BJ (cell line): ENCODE measurements at regions of chr11 and their contacts with region 1.

Region 1: DNA sequence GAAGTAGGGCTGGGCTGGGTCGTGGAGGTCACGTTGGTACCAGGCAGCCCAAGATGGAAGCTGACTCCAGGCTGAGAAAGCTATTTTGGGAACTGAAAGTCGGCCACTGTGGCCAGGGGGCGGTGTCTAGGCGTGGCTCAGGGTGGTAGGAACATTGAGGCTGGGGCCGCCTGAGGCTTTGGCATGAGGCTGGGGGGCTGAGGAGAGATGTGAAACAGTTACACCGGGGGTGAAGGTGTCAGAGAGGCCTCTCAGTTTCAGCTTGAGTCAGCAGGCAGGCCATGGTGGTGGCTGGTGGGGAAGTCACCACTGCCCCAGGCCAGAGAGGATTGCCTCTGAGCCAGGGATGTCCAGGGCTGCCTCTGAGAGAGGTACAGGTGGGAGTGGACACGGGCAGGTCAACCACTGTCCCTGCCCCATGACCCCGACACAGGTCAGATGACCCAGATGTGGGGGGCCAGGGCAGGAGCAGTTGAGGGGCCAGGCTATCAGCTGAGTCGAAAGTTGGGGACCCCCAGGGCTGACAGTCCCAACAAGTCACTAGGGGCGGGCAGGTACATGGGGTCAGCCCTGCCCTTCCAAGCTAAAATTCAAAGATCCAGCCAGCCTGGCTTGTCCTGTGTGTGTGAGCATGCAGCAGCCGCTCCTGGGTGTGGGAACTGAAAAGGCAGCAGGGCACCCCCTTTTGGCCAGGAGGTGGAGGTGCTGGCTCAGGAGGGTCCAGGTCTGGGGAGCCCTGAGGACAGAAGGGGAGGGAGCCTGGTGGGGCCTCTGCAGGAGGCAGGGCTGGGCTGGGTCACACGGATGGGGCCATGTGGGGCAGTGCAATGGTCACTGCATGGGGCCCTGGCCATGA is 7.2 kb downstream of the KCNK7 start:
- DNase-seq: no peak
- H3K4me3 ChIP-seq: no peak overlapping the region
- H3K27me3 ChIP-seq: no peaks in the 10 kb centered on the region
- CTCF ChIP-seq: peak; percentile 58

Region 2: DNA sequence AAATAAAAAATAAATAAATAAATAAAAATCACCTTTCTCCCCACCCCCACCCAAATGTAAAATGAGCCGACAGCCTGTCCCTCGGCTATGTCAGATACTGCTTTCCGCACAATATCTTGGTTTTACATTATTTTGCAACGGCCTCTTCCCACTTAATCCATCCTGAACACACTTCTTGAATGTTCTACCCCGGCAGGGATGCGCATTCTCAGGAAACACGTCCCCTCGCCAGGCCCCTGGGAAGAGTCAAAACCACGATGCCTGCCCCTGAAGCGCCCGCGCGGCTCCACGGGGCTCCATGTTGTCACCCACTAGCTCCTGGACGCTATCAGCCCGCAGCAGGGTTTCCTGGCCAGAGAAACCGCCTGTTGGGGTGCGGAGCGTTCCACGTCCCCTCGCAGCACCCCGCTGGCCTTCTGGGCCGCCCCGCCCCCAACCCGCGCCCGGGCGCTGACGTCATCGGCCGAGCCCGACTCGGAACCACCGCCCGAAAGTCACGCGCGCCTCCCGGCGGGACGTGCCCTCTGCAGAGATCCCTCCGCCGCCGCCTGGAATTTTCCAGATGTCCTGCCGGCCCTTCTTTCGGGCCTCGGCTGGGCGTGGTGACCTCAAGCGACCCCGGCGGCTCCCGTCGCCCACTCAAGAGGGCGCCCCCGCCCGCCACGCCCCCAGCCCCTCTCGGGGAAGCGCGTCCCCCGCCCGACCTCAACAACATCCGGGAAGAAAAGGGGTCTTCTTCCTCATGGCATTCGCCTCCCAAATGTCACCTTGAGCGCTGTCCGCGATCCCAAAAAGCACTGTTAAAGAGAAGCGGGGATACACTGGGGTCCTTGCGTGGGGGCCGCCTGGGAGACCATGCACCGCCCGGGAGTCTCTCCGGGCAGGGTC is 166.4 kb before region 1 on chr11:
- CTCF ChIA-PET with region 1: no interaction called
- POLR2A ChIA-PET with region 1: no interaction called
- DNase-seq: peak; percentile 65
- H3K4me3 ChIP-seq: peak overlapping the region; percentile 72
- H3K27me3 ChIP-seq: no peaks in the 10 kb centered on the region
- CTCF ChIP-seq: no peak

Region 3: GRCh38 chr11:65569973-65570918 is 18.2 kb before region 1 on chr11 and contains the start of gene ZNRD2:
- CTCF ChIA-PET with region 1: interaction called, 83 read pairs
- POLR2A ChIA-PET with region 1: interaction called, 21 read pairs
- DNase-seq: peak; percentile 89
- H3K4me3 ChIP-seq: peak within 1 kb of the TSS; percentile 93
- H3K27me3 ChIP-seq: no peaks in the 10 kb centered on the region
- CTCF ChIP-seq: peak; percentile 57
- polyA plus RNA-seq, gene ZNRD2: 48.7 and 73.3 TPM in 2 replicates

Region 4: GRCh38 chr11:65576867-65577769 is 11.3 kb before region 1 on chr11:
- CTCF ChIA-PET with region 1: interaction called, 83 read pairs
- POLR2A ChIA-PET with region 1: interaction called, 21 read pairs
- DNase-seq: no peak
- H3K4me3 ChIP-seq: peak overlapping the region; percentile 74
- H3K27me3 ChIP-seq: no peaks in the 10 kb centered on the region
- CTCF ChIP-seq: no peak

Region 5: GRCh38 chr11:65606876-65607613 is 18.6 kb after region 1 on chr11:
- CTCF ChIA-PET with region 1: interaction called, 43 read pairs
- POLR2A ChIA-PET with region 1: no interaction called
- DNase-seq: peak; percentile 86
- H3K4me3 ChIP-seq: peak overlapping the region; percentile 18
- H3K27me3 ChIP-seq: no peaks in the 10 kb centered on the region
- CTCF ChIP-seq: no peak